Right ventricle myocardium inferior (tissue), 1 donor: ENCODE measurements at regions of chrX and their contacts with region 1.

Region 1: GRCh38 chrX:119791438-119792231 is at the start of gene RPL39:
- DNase-seq: peak; percentile 89
- ATAC-seq: peak; percentile 98
- total RNA-seq, gene RPL39: 1,140 TPM

Region 2: GRCh38 chrX:119606280-119607015 is 185.2 kb before region 1 on chrX and contains the start of gene NKRF:
- intact Hi-C with region 1: loop called (anchors 1 kb)
- DNase-seq: peak; percentile 97
- ATAC-seq: peak; percentile 96
- total RNA-seq, gene NKRF: 4.2 TPM

Region 3: DNA sequence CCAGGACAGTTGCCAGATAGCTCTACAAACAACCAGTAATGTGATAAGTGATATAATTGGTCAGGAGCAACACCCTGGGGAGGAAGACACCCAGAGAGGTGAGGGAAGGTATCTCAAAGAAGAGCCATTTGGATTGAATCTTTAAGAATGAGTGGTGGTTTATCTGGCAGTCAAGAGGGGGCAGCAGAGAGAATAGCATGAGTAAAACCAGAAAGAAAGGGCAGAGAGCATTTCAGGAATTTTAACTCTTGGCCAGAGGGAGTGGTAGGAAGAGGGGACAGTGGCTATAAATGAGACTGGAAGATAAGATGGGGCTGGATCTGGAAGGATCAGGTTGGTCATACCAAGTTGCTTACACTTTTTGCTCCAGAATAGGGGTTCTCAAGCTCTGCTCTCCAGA is 92.8 kb before region 1 on chrX:
- intact Hi-C with region 1: loop called (anchors 5 kb)
- DNase-seq: no peak
- ATAC-seq: no peak

Region 4: DNA sequence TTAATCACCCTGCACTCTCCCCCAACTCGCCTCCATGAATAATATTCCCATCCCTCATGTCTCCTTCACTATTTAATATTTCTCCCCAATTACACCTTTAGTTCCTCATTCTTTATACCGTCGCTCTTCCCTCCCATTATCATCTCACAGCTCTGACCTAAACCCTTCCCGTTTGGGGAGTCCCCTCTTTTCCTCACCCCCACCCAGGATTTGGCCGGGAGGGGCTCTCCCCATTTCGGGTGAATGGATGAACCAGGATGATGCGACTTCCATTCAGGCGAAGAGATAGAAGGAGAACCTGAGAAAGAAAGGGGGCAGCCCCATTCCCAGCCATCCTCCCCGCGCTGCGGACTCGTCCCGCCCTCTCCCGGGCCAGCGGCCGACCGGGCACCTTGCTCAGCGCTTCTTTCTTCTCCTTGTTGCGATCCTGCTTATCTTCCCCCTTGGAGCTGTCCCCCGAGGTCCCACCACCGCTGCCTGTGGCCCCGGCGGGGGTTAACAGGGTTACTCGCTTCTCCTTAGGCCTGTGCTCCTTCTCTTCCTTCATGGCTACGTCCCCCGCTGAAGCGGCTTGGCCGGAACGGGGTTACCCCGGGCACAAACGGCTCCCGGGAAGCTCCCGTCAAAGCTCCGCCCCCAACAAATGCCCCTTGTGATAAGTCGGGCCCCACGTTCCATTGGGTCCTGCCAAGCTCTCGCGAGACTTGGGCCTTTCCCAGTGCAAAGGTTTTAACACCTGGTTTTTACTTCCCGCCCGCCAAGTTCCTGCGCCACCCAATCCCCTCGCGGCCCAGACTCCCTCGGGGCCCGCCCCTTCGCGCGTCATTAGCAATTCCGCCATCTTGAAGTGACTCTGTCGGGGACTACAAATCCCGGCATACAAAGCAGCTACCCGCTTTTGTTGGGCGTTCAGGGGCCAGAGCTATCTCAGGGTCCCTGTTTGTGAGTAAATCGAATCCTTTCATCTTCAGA is 61.0 kb after region 1 on chrX and contains the start of gene UPF3B:
- intact Hi-C with region 1: loop called (anchors 5 kb)
- DNase-seq: peak; percentile 96
- ATAC-seq: peak; percentile 98
- total RNA-seq, gene UPF3B: 3.4 TPM